ENCODE measurements at regions of chr11 and their contacts with region 1.

Region 1: GRCh38 chr11:506238-506994 is 626 bp downstream of the RNH1 start:
- DNase-seq: peak; percentile 98
- H3K4me3 Mint-ChIP-seq: peak overlapping the region; percentile 97
- H3K27ac Mint-ChIP-seq: peak overlapping the region; percentile 100
- H3K4me1 Mint-ChIP-seq: peaks cover 27% of the 10 kb centered on the region
- H3K27me3 Mint-ChIP-seq: no peaks in the 10 kb centered on the region

Region 2: DNA sequence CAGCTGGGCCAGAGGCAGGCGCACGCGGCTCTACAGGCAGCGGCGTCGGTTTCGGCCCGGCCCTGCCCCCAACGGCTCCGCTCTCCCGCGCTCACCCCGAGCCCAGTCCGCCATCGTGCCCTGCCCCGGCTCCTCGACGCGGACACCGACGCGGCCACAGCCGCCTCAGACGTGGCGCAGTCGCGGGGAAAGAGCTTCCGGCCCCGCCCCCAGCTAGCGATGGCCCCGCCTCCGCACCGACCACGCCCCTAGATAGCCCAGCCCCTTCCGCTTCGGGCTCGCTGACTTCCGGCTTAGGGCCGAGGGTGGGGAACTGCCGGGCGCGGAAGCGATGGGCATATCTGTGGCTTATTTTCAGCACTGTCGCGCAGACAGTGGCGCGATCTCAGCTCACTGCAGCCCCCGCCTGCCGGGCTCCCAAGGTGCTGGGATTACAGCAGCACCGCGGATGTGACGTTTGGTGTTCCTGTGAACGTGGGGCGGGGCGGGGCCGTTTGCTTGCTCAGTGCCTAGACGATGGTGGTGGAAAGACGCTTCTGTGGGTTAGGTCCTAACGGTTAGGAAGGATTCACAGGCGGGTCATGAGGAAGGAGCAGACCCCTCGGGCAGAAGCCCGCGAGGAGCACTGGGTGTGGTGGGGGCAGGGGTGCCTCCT is 299.1 kb before region 1 on chr11 and contains the starts of genes BET1L and RIC8A:
- CTCF ChIA-PET with region 1: no interaction called
- POLR2A ChIA-PET with region 1: no interaction called
- intact Hi-C with region 1: loop called (anchors 1 kb)
- DNase-seq: peak; percentile 98
- H3K4me3 Mint-ChIP-seq: peak within 1 kb of the TSS; percentile 97
- H3K27ac Mint-ChIP-seq: peak within 1 kb of the TSS; percentile 99
- H3K4me1 Mint-ChIP-seq: peaks cover 55% of the 10 kb centered on the region
- H3K27me3 Mint-ChIP-seq: no peaks in the 10 kb centered on the region
- total RNA-seq, gene BET1L: 51.0 to 53.2 TPM
- total RNA-seq, gene RIC8A: 100 to 104 TPM

Region 3: DNA sequence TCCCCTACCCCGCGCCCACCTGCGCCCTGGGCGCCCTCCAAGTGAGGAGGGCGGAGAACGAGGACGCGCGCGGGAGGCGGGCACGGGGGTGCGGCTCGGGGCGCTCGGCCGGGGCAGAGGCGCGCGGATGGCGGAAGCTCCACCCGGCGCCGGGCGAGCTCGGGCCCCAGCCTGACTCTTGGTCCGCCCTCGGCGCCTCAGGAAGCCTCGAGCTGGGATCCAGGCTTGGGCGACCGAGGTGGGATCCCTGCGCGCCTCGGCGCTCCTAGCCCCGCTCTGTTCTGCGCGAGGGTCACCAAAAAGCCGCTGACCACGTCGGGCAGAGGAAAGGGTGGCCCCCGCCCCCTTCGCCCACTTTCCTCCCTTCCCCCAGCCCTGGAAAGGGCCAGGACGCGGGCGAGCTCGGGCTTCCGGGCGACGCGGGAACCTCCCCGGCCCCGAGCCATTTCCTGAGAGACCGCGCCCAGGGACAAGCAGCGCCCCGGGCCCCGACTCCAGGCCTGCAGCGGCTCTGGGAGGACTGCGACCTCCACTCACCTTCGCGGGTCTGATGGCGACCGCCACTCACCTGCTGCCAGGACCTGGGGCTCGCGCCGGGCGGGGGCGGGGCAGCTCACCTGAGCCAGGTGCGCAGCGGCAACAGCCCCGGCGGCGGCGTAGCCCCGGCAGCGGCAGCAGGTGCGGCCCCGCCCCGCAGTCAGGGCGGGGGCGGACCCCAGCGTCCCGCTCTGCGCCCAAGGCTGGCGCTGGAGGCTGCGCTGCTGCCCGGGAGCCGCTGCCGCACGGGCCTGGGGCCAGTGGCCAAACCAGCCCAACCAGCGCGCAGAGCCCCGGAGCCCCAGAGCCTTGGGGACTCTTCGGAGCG is 89.4 kb before region 1 on chr11:
- CTCF ChIA-PET with region 1: no interaction called
- POLR2A ChIA-PET with region 1: interaction called, 6 read pairs
- intact Hi-C with region 1: loop called (anchors 2 kb)
- DNase-seq: peak; percentile 57
- H3K4me3 Mint-ChIP-seq: peak overlapping the region; percentile 83
- H3K27ac Mint-ChIP-seq: no peak overlapping the region
- H3K4me1 Mint-ChIP-seq: peaks cover 25% of the 10 kb centered on the region
- H3K27me3 Mint-ChIP-seq: no peaks in the 10 kb centered on the region

Region 4: GRCh38 chr11:518463-519250 is 12.2 kb after region 1 on chr11:
- CTCF ChIA-PET with region 1: interaction called, 40 read pairs
- POLR2A ChIA-PET with region 1: interaction called, 7 read pairs
- intact Hi-C with region 1: loop called (anchors 1 kb)
- DNase-seq: peak; percentile 93
- H3K4me3 Mint-ChIP-seq: peak overlapping the region; percentile 78
- H3K27ac Mint-ChIP-seq: peak overlapping the region; percentile 44
- H3K4me1 Mint-ChIP-seq: peaks cover 8% of the 10 kb centered on the region
- H3K27me3 Mint-ChIP-seq: no peaks in the 10 kb centered on the region

Region 5: GRCh38 chr11:575996-576768 is 69.8 kb after region 1 on chr11 and contains the start of gene PHRF1:
- CTCF ChIA-PET with region 1: no interaction called
- POLR2A ChIA-PET with region 1: interaction called, 3 read pairs
- intact Hi-C with region 1: loop called (anchors 2 kb)
- DNase-seq: peak; percentile 95
- H3K4me3 Mint-ChIP-seq: peak within 1 kb of the TSS; percentile 87
- H3K27ac Mint-ChIP-seq: peak within 1 kb of the TSS; percentile 98
- H3K4me1 Mint-ChIP-seq: peaks cover 45% of the 10 kb centered on the region
- H3K27me3 Mint-ChIP-seq: peaks cover 5% of the 10 kb centered on the region
- total RNA-seq, gene PHRF1: 32.4 to 33.5 TPM

Measured in activated CD4-positive, alpha-beta memory T cell treated with anti-CD3 and anti-CD28 coated beads for 36 hours (primary cell).